ENCODE measurements at regions of chr12 and their contacts with region 1.

Region 1: DNA sequence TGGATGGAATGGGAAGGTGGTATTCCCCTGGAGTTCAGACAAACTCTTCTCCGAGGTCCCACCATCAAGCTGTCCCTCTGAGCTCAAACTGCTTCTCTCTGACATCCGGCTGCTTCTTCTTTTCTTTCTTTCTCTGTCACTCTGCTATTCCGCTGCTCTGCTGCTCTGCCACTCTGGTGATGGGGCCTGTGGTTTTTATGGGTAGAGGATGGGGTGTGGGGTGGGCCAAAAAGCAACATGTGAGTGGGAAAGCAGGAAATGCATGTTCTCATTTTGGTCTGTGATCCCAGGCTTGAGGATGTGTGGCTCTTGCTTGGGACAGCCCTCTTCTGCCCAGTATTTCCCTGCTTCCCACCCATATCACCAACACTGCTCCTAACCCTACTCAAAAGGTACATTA is 30.6 kb downstream of the CLECL1 start:
- DNase-seq: peak in 8 of 10 donors; percentile 34 to 80 (median 68)
- ATAC-seq: peak; percentile 60 to 88
- H3K4me3 Mint-ChIP-seq: peak overlapping the region; percentile 47 to 85 (median 72)
- H3K27ac Mint-ChIP-seq: peak overlapping the region; percentile 82 to 97 (median 94)
- H3K4me1 Mint-ChIP-seq: peaks cover 31 to 84% (median 66%) of the 10 kb centered on the region in 4 donors
- H3K27me3 Mint-ChIP-seq: no peaks in the 10 kb centered on the region

Region 2: DNA sequence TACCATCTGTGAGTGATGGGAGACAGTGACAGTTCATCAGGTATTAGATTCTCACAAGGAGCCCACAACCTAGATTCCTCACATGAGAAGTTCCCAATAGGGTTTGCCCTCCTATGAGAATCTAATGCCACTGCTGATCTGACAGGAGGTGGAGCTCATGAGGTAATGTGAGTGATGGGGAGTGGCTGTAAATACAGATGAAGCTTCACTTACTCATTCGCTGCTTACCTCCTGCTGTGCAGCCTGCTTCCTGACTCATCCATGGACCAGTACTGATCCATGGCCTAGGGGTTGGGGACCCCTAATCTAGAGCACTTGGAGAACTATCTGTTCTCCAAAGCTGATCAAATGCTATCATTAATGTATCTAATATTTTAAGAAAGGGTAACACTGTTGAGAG is 15.0 kb before region 1 on chr12:
- POLR2A ChIA-PET with region 1: interaction called, 17 read pairs
- DNase-seq: no peak
- ATAC-seq: peak; percentile 16 to 32
- H3K4me3 Mint-ChIP-seq: peak overlapping the region in 8 of 10 donors; percentile 22 to 68 (median 49)
- H3K27ac Mint-ChIP-seq: peak overlapping the region in 9 of 10 donors; percentile 74 to 91 (median 83)
- H3K4me1 Mint-ChIP-seq: peaks cover 20 to 81% (median 56%) of the 10 kb centered on the region in 4 donors
- H3K27me3 Mint-ChIP-seq: no peaks in the 10 kb centered on the region

Region 3: GRCh38 chr12:9773216-9773877 is 71.1 kb after region 1 on chr12:
- POLR2A ChIA-PET with region 1: no interaction called
- DNase-seq: peak in 3 of 10 donors; percentile 41 to 58 (median 54)
- ATAC-seq: peak; percentile 77 to 89
- H3K4me3 Mint-ChIP-seq: peak overlapping the region; percentile 17 to 74 (median 50)
- H3K27ac Mint-ChIP-seq: peak overlapping the region in 8 of 10 donors; percentile 2 to 88 (median 68)
- H3K4me1 Mint-ChIP-seq: peaks cover 24 to 84% (median 66%) of the 10 kb centered on the region in 4 donors
- H3K27me3 Mint-ChIP-seq: no peaks in the 10 kb centered on the region

Measured in naive thymus-derived CD8-positive, alpha-beta T cell (primary cell).